ENCODE measurements at regions of chr17 and their contacts with region 1.

Region 1: GRCh38 chr17:50094753-50095619 is at the start of gene PDK2:
- DNase-seq: peak; percentile 90 to 98 (median 96)
- ATAC-seq: peak; percentile 93
- H3K4me3 ChIP-seq: peak within 1 kb of the TSS; percentile 92
- H3K4me3 Mint-ChIP-seq: peak within 1 kb of the TSS; percentile 96
- H3K27ac ChIP-seq: peak within 1 kb of the TSS; percentile 71 to 83
- H3K27ac Mint-ChIP-seq: peak within 1 kb of the TSS; percentile 88
- H3K4me1 ChIP-seq: peaks cover 25% of the 10 kb centered on the region
- H3K4me1 Mint-ChIP-seq: peaks cover 34% of the 10 kb centered on the region
- H3K27me3 ChIP-seq: no peaks in the 10 kb centered on the region
- H3K27me3 Mint-ChIP-seq: no peaks in the 10 kb centered on the region
- CTCF ChIP-seq: no peak
- total RNA-seq, gene PDK2: 8.7 to 10.1 TPM

Region 2: DNA sequence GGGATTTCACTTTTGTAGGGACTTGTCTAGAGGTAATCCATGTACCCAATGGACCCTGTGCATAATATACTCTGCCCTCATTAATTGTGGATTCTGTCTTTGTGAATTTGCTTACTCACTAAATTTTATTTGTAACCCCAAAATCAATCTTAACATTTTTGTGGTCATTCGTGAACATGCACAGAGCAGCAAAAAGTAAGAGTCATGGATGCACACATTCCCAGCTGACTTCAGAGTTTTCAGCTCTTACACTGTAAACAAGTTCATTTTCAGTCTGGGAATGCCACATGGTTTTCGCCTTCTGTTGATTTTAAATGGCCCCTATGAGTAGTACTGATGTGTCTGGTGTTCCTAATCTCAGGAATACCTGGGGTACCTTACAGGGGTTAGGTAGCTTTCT is 271.4 kb before region 1 on chr17:
- CTCF ChIA-PET with region 1: no interaction called
- POLR2A ChIA-PET with region 1: no interaction called
- intact Hi-C with region 1: no loop called
- DNase-seq: no peak
- ATAC-seq: no peak
- H3K4me3 ChIP-seq: no peak overlapping the region
- H3K4me3 Mint-ChIP-seq: no peak overlapping the region
- H3K27ac ChIP-seq: no peak overlapping the region
- H3K27ac Mint-ChIP-seq: peak overlapping the region; percentile 12
- H3K4me1 ChIP-seq: peaks cover 32% of the 10 kb centered on the region
- H3K4me1 Mint-ChIP-seq: peaks cover 37% of the 10 kb centered on the region
- H3K27me3 ChIP-seq: no peaks in the 10 kb centered on the region
- H3K27me3 Mint-ChIP-seq: no peaks in the 10 kb centered on the region
- CTCF ChIP-seq: no peak

Region 3: DNA sequence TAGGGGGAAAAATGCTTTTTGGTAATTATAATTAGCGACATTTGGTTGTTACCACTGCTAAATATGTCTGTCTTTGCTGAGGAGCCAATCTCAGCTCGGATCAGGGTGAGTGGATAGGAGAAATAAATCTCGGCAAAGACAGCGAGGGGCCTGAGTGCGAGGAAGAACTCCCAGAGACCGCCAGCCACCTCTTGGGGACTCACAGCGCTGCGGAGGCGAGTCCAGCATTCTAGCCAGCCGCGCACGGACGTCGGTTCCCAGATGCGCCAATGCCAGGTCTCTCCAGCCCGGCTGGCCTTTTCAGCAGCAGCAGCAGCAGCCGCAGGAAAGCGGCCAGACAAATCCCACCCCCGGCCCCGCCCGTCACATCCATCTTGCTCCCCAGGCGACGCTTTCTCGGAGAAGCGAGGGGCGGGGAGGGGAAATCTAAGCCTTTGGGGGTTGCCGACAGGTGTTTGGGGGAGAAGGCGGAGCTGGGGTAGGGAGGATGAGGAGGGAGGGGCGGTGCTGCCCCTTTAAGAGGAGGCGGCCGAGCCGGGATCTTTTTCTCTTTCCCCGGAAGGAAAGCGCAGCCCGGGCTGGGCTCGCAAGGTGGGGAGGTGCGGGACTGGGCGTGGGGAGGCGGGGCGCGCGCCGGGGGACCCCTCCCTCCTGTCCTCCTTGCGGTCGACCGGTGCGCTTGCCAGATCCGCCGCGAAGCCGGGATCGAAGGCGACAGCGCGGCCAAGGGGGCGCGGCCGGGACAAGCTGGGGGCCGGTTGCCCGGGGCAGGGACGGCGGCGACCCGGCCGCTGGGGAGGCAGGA is 39.4 kb before region 1 on chr17 and contains the start of gene ITGA3:
- CTCF ChIA-PET with region 1: interaction called, 17 read pairs
- POLR2A ChIA-PET with region 1: interaction called, 6 read pairs
- intact Hi-C with region 1: loop called in 1 of 2 experiments (anchors 5 kb)
- DNase-seq: peak; percentile 14 to 81 (median 58)
- ATAC-seq: peak; percentile 58
- H3K4me3 ChIP-seq: peak within 1 kb of the TSS; percentile 78
- H3K4me3 Mint-ChIP-seq: peak within 1 kb of the TSS; percentile 93
- H3K27ac ChIP-seq: peak within 1 kb of the TSS; percentile 21 to 23
- H3K27ac Mint-ChIP-seq: peak within 1 kb of the TSS; percentile 62
- H3K4me1 ChIP-seq: peaks cover 27% of the 10 kb centered on the region
- H3K4me1 Mint-ChIP-seq: peaks cover 30% of the 10 kb centered on the region
- H3K27me3 ChIP-seq: no peaks in the 10 kb centered on the region
- H3K27me3 Mint-ChIP-seq: no peaks in the 10 kb centered on the region
- CTCF ChIP-seq: no peak
- total RNA-seq, gene ITGA3: 2.3 to 2.4 TPM

Region 4: DNA sequence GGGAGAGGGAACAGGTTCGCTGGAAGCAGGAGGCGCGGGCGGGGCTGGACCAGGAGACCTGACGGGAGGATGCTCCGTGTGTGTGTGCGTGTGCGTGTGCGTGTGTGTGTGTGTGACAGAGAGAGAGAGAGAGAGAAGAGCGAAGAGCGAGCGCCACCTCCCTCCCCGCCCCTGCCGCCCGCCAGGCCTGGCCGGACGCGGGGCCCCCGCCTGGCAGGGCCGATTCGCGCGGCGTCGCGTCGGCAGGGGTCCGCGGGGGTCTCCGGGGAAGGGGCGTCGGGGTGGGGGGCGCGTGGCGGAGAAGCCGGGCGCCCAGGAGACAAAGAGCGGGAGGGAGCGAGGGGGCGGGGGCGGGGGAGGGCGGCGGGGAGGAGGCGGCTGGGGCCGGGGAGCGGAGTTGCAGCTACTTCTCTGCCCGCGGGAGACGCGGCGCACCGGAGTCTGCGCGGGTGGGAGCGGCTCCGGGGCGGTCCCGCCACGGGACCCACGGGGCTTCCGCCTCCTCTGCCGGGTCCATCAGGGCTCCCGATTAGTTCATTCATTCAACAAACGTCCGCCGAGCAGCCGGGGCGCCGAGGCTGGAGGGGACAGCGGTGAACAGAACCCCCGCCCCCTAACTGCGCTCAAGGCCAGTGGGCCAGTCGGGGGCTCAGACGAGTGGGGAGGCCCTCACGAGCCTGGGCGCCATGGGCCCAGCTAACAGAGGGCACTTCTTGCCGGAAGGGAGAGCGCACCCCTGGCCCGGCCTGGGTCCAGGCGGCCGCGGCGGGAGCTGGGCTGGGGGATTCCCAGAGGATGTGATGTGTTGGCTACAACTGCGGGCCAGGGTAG is 35.0 kb after region 1 on chr17 and contains the start of gene SAMD14:
- CTCF ChIA-PET with region 1: interaction called, 10 read pairs
- POLR2A ChIA-PET with region 1: no interaction called
- intact Hi-C with region 1: no loop called
- DNase-seq: peak in 11 of 14 experiments; percentile 42 to 83 (median 55)
- ATAC-seq: peak; percentile 75
- H3K4me3 ChIP-seq: peak within 1 kb of the TSS; percentile 57
- H3K4me3 Mint-ChIP-seq: peak within 1 kb of the TSS; percentile 89
- H3K27ac ChIP-seq: no peak within 1 kb of the TSS
- H3K27ac Mint-ChIP-seq: peak within 1 kb of the TSS; percentile 81
- H3K4me1 ChIP-seq: peaks cover 35% of the 10 kb centered on the region
- H3K4me1 Mint-ChIP-seq: peaks cover 33% of the 10 kb centered on the region
- H3K27me3 ChIP-seq: peaks cover 10 to 13% of the 10 kb centered on the region in 2 experiments
- H3K27me3 Mint-ChIP-seq: peaks cover 27% of the 10 kb centered on the region
- CTCF ChIP-seq: no peak
- total RNA-seq, gene SAMD14: 0.33 to 0.53 TPM

Region 5: DNA sequence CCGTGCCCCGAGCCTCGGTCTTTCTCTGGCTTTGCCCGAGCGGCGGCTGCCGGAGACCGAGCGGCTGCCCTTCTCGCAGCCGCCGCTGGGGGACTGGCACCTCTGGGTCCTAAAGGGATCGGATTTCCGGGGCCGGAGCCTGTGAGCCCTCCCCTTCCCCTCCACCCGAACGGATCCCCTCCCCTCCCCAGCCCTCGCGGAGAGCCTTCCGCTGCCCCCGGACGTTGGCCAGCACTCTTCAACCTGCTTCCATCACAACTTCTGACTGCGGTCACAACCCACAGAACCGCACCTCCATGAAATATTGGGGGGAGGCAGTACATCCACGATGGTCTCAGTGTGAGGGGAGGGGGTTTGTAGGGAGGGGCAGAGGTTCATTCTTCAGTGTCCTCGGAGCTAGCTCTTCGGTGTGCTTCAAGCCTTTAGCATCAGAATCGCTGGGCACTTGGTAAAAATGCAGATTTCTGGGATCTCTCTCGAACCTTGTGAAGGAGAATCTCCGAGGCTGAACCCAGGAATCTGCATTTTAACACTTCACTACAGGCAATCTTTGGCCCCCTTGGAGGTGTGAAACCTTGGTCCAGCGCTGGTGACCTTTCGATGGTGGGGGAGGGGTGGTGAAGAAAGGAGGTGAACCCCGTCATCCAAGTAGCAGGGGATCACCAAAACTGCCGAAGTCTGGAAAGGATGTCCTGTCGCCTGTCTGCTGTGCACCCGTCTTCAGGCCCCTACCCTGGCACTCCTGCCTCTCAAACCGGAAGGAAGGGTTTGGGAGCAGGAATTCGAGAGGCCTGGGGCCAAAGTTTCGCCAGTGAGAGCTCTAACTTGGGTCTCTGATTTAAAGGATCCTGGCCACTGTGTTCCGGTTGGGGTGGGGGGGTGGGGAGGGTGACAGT is 56.3 kb after region 1 on chr17:
- CTCF ChIA-PET with region 1: interaction called, 6 read pairs
- POLR2A ChIA-PET with region 1: interaction called, 14 read pairs
- intact Hi-C with region 1: loop called in 1 of 2 experiments (anchors 5 kb)
- DNase-seq: peak; percentile 68 to 95 (median 80)
- ATAC-seq: peak; percentile 64
- H3K4me3 ChIP-seq: peak overlapping the region; percentile 86
- H3K4me3 Mint-ChIP-seq: peak overlapping the region; percentile 90
- H3K27ac ChIP-seq: peak overlapping the region; percentile 47 to 74
- H3K27ac Mint-ChIP-seq: peak overlapping the region; percentile 84
- H3K4me1 ChIP-seq: peaks cover 54% of the 10 kb centered on the region
- H3K4me1 Mint-ChIP-seq: peaks cover 51% of the 10 kb centered on the region
- H3K27me3 ChIP-seq: no peaks in the 10 kb centered on the region
- H3K27me3 Mint-ChIP-seq: no peaks in the 10 kb centered on the region
- CTCF ChIP-seq: peak; percentile 52

Region 6: GRCh38 chr17:50161023-50161910 is 66.3 kb after region 1 on chr17:
- CTCF ChIA-PET with region 1: interaction called, 10 read pairs
- POLR2A ChIA-PET with region 1: interaction called, 6 read pairs
- intact Hi-C with region 1: loop called in 1 of 2 experiments (anchors 2 kb)
- DNase-seq: peak; percentile 88 to 97 (median 93)
- ATAC-seq: peak; percentile 94
- H3K4me3 ChIP-seq: peak overlapping the region; percentile 76
- H3K4me3 Mint-ChIP-seq: peak overlapping the region; percentile 59
- H3K27ac ChIP-seq: no peak overlapping the region
- H3K27ac Mint-ChIP-seq: peak overlapping the region; percentile 70
- H3K4me1 ChIP-seq: peaks cover 36% of the 10 kb centered on the region
- H3K4me1 Mint-ChIP-seq: peaks cover 44% of the 10 kb centered on the region
- H3K27me3 ChIP-seq: no peaks in the 10 kb centered on the region
- H3K27me3 Mint-ChIP-seq: no peaks in the 10 kb centered on the region
- CTCF ChIP-seq: peak; percentile 93

Region 7: GRCh38 chr17:50269477-50270434 is 174.8 kb after region 1 on chr17:
- CTCF ChIA-PET with region 1: no interaction called
- POLR2A ChIA-PET with region 1: no interaction called
- intact Hi-C with region 1: loop called in 1 of 2 experiments (anchors 5 kb)
- DNase-seq: peak; percentile 30 to 73 (median 45)
- ATAC-seq: peak; percentile 83
- H3K4me3 ChIP-seq: no peak overlapping the region
- H3K4me3 Mint-ChIP-seq: no peak overlapping the region
- H3K27ac ChIP-seq: no peak overlapping the region
- H3K27ac Mint-ChIP-seq: no peak overlapping the region
- H3K4me1 ChIP-seq: peaks cover 13% of the 10 kb centered on the region
- H3K4me1 Mint-ChIP-seq: peaks cover 6% of the 10 kb centered on the region
- H3K27me3 ChIP-seq: peaks cover 17 to 20% of the 10 kb centered on the region in 2 experiments
- H3K27me3 Mint-ChIP-seq: peaks cover 23% of the 10 kb centered on the region
- CTCF ChIP-seq: peak; percentile 68

Region 8: GRCh38 chr17:50297407-50297865 is 202.4 kb after region 1 on chr17:
- CTCF ChIA-PET with region 1: interaction called, 11 read pairs
- POLR2A ChIA-PET with region 1: no interaction called
- intact Hi-C with region 1: loop called (anchors 1 kb)
- DNase-seq: peak; percentile 67 to 85 (median 72)
- ATAC-seq: peak; percentile 100
- H3K4me3 ChIP-seq: no peak overlapping the region
- H3K4me3 Mint-ChIP-seq: no peak overlapping the region
- H3K27ac ChIP-seq: no peak overlapping the region
- H3K27ac Mint-ChIP-seq: no peak overlapping the region
- H3K4me1 ChIP-seq: no peaks in the 10 kb centered on the region
- H3K4me1 Mint-ChIP-seq: no peaks in the 10 kb centered on the region
- H3K27me3 ChIP-seq: peaks cover 0 to 3% of the 10 kb centered on the region in 2 experiments
- H3K27me3 Mint-ChIP-seq: peaks cover 16% of the 10 kb centered on the region
- CTCF ChIP-seq: peak; percentile 84

Measured in CD4-positive, alpha-beta T cell (primary cell).